Colonic mucosa (tissue), 4 donors: ENCODE measurements at regions of chr7 and their contacts with region 1.

Region 1: DNA sequence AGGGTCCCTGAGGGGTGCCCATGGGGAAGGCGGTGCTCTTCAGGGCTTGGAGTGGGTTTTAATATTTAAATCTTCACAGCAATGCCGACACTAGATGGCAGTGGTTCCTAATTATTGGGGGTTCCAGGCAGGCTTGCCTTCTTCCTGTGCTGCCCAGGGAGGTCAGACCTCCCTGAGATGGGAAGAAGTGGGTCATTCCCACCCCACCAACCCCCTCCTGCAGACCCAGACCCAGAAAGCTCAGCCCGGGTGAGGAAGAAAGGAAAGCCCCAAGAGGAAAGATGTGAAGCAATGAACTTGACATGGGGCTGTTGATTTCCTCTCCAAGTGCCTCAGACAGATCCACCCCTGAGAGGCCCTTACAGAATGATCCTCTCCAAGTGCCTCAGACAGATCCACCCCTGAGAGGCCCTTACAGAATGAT is 85.1 kb upstream of the LANCL2 start:
- DNase-seq: peak; percentile 61
- H3K4me3 ChIP-seq: no peak overlapping the region
- H3K27ac ChIP-seq: no peak overlapping the region
- H3K4me1 ChIP-seq: no peaks in the 10 kb centered on the region
- H3K27me3 ChIP-seq: no peaks in the 10 kb centered on the region
- CTCF ChIP-seq: peak; percentile 43

Region 2: GRCh38 chr7:55030314-55030713 is 249.7 kb before region 1 on chr7:
- intact Hi-C with region 1: no loop called
- DNase-seq: no peak
- H3K4me3 ChIP-seq: no peak overlapping the region
- H3K27ac ChIP-seq: no peak overlapping the region
- H3K4me1 ChIP-seq: no peaks in the 10 kb centered on the region
- H3K27me3 ChIP-seq: no peaks in the 10 kb centered on the region
- CTCF ChIP-seq: no peak

Region 3: GRCh38 chr7:55192718-55193117 is 87.3 kb before region 1 on chr7:
- intact Hi-C with region 1: no loop called
- DNase-seq: no peak
- H3K4me3 ChIP-seq: no peak overlapping the region
- H3K27ac ChIP-seq: no peak overlapping the region
- H3K4me1 ChIP-seq: peaks cover 2% of the 10 kb centered on the region
- H3K27me3 ChIP-seq: no peaks in the 10 kb centered on the region
- CTCF ChIP-seq: no peak

Region 4: GRCh38 chr7:55365675-55366460 is 85.8 kb after region 1 on chr7:
- intact Hi-C with region 1: loop called (anchors 10 kb)
- DNase-seq: peak; percentile 96
- H3K4me3 ChIP-seq: peak overlapping the region; percentile 85
- H3K27ac ChIP-seq: peak overlapping the region; percentile 99
- H3K4me1 ChIP-seq: peaks cover 4% of the 10 kb centered on the region
- H3K27me3 ChIP-seq: no peaks in the 10 kb centered on the region
- CTCF ChIP-seq: peak; percentile 23

Region 5: GRCh38 chr7:55415173-55415778 is 135.2 kb after region 1 on chr7:
- intact Hi-C with region 1: loop called (anchors 2 kb)
- DNase-seq: peak; percentile 83
- H3K4me3 ChIP-seq: no peak overlapping the region
- H3K27ac ChIP-seq: no peak overlapping the region
- H3K4me1 ChIP-seq: no peaks in the 10 kb centered on the region
- H3K27me3 ChIP-seq: no peaks in the 10 kb centered on the region
- CTCF ChIP-seq: peak; percentile 64

Region 6: GRCh38 chr7:55593515-55594318 is 313.7 kb after region 1 on chr7:
- intact Hi-C with region 1: loop called (anchors 5 kb)
- DNase-seq: peak; percentile 76
- H3K4me3 ChIP-seq: no peak overlapping the region
- H3K27ac ChIP-seq: no peak overlapping the region
- H3K4me1 ChIP-seq: no peaks in the 10 kb centered on the region
- H3K27me3 ChIP-seq: no peaks in the 10 kb centered on the region
- CTCF ChIP-seq: peak; percentile 86